Colonic mucosa (tissue), 4 donors: ENCODE measurements at regions of chr9 and their contacts with region 1.

Region 1: DNA sequence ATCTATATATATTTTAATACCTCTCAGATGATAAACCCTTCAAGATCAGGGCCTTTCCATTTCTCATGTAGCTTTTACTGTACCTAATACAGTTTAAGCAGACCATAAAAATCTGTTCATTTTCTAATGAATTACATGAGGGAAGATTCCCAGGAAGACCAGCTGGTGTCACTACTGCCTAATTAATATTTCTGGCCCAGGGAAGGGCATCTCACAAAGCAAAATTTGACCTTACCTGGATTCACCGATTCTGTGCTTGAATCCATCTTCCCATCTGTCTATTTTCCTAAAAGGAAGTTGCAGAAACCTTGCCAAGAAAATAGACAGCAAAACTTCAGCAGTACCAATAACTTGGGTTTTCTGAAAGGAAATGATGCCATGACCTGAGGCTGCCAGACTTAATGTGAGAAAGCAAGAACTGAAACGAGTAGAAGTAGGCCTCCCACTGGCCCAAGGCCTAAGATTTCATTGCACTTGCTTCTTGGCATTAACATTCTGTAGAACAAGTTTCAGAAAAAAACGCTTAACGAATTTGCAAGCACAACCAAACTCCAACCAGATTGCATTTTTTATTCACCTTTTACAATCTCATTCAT is 83.0 kb upstream of the GLIS3 start:
- DNase-seq: no peak
- H3K4me3 ChIP-seq: no peak overlapping the region
- H3K27ac ChIP-seq: no peak overlapping the region
- H3K4me1 ChIP-seq: no peaks in the 10 kb centered on the region
- H3K27me3 ChIP-seq: no peaks in the 10 kb centered on the region
- CTCF ChIP-seq: peak; percentile 29

Region 2: DNA sequence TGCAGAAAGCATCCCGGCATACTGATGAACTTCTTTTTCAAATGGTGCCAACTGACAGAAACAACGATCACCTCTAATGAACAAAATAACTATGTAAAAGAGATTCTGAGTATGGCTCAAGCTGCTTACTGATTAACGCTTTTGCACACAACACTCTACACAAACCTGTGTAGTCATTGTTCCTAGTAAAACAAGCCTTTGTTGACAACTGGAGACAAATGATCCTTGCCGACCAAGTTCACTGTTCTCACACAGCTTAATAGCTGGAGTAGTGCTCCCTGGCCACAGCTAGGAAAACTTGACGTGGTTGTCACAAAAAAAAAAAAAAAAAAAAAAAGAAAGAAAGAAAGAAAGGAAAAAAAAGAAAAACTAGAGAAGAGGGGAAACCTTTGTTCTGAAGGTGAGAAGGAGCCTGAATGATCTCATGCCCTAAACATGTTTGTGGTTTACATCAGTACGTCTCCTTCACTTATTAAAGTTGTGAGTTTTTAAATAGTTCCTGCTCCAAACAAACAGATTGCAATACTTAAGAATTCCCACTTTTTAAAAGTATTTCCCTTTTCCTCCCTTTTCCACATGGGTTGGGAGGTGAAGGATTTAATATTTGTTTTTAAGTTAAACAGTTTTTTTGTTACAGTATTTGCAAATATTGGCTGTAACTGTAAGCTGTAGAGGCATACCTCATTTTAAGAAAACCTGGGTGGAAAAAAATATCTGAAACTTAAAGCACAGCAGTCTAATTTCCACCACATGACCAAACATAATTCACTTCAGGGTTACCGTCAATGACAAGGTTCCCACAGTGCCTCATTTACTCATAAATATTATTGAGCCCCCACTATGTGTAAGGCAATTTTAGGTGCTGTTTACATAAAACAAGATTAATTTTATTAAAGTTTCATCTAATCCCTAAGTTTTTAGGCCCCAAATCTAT is 146.7 kb before region 1 on chr9:
- intact Hi-C with region 1: no loop called
- DNase-seq: no peak
- H3K4me3 ChIP-seq: no peak overlapping the region
- H3K27ac ChIP-seq: peak overlapping the region; percentile 4
- H3K4me1 ChIP-seq: no peaks in the 10 kb centered on the region
- H3K27me3 ChIP-seq: no peaks in the 10 kb centered on the region
- CTCF ChIP-seq: no peak

Region 3: DNA sequence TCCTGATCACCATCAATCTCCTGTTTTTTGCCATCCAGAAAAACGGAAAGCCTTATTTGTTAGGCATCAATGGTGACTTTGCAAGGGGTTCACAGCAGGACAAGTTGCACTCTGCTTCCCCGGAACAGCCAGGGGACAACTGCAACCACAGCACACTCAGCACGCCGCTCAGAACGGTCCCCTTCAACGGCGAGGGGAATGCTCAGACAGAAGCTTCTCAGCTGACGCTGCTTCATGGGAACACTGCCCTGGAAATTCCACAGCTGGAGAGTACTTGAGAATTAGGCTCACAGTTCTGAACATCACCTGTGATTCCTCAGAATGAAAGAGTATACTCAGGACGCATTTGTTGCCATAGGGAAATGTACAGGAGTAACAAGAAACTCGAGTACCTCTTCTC is 239.2 kb after region 1 on chr9:
- intact Hi-C with region 1: no loop called
- DNase-seq: no peak
- H3K4me3 ChIP-seq: no peak overlapping the region
- H3K27ac ChIP-seq: no peak overlapping the region
- H3K4me1 ChIP-seq: no peaks in the 10 kb centered on the region
- H3K27me3 ChIP-seq: no peaks in the 10 kb centered on the region
- CTCF ChIP-seq: no peak

Region 4: GRCh38 chr9:4639420-4639819 is 256.6 kb after region 1 on chr9:
- intact Hi-C with region 1: loop called (anchors 5 kb)
- DNase-seq: no peak
- H3K4me3 ChIP-seq: no peak overlapping the region
- H3K27ac ChIP-seq: no peak overlapping the region
- H3K4me1 ChIP-seq: no peaks in the 10 kb centered on the region
- H3K27me3 ChIP-seq: no peaks in the 10 kb centered on the region
- CTCF ChIP-seq: no peak